Activated CD4-positive, alpha-beta T cell treated with anti-CD3 and anti-CD28 coated beads, Interleukin-2, amount 10 ng/mL, durations not matched to agents 24 days and 14 days (primary cell): ENCODE measurements at regions of chr13 and their contacts with region 1.

Region 1: GRCh38 chr13:75319254-75319653 is 162.7 kb downstream of the TBC1D4 start:
- DNase-seq: no peak
- H3K4me3 Mint-ChIP-seq: peak overlapping the region; percentile 4
- H3K27ac Mint-ChIP-seq: peak overlapping the region; percentile 93
- H3K4me1 Mint-ChIP-seq: peaks cover 51% of the 10 kb centered on the region
- H3K27me3 Mint-ChIP-seq: no peaks in the 10 kb centered on the region

Region 2: DNA sequence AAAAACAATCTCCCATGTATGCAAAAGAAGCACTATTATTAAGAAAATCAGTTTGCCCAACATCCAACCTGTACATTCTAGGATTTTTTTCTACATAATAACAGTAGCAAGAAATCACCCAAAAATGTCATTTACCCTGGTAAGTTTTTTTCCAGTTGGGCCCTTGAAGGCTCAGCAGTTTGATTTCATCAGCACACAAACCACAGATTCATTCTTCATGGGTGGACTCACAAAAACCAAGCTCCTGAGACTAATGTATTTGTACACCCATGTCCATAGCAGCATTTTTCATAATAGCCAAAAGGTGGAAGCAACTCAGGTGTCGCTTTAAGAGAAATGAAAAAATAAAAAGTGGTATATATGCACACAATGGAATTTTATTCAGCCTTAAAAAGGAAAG is 47.4 kb before region 1 on chr13:
- intact Hi-C with region 1: no loop called
- DNase-seq: no peak
- H3K4me3 Mint-ChIP-seq: no peak overlapping the region
- H3K27ac Mint-ChIP-seq: no peak overlapping the region
- H3K4me1 Mint-ChIP-seq: no peaks in the 10 kb centered on the region
- H3K27me3 Mint-ChIP-seq: no peaks in the 10 kb centered on the region

Region 3: GRCh38 chr13:75299913-75300862 is 19.1 kb before region 1 on chr13:
- intact Hi-C with region 1: loop called (anchors 1 kb)
- DNase-seq: no peak
- H3K4me3 Mint-ChIP-seq: peak overlapping the region; percentile 43
- H3K27ac Mint-ChIP-seq: peak overlapping the region; percentile 72
- H3K4me1 Mint-ChIP-seq: peaks cover 20% of the 10 kb centered on the region
- H3K27me3 Mint-ChIP-seq: no peaks in the 10 kb centered on the region

Region 4: DNA sequence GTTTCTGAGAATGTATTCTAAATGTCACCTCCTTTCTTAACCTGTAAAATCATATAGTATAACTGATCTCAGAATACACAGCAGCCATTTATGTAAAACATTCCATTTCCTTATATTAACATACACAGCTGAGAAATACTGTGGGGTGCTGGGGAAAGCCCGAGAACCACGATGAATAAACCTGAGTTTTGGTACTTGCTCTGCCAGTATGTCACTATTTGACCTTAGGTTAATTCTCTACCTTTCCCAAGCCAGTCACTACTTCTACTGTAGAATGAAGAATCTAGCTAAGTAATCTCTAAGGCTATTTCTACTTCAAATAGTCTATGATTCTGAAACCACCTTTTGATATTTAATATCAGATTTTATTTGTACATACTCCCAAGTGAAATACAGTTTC is 11.0 kb before region 1 on chr13:
- intact Hi-C with region 1: loop called (anchors 1 kb)
- DNase-seq: no peak
- H3K4me3 Mint-ChIP-seq: peak overlapping the region; percentile 4
- H3K27ac Mint-ChIP-seq: peak overlapping the region; percentile 46
- H3K4me1 Mint-ChIP-seq: peaks cover 47% of the 10 kb centered on the region
- H3K27me3 Mint-ChIP-seq: no peaks in the 10 kb centered on the region

Region 5: DNA sequence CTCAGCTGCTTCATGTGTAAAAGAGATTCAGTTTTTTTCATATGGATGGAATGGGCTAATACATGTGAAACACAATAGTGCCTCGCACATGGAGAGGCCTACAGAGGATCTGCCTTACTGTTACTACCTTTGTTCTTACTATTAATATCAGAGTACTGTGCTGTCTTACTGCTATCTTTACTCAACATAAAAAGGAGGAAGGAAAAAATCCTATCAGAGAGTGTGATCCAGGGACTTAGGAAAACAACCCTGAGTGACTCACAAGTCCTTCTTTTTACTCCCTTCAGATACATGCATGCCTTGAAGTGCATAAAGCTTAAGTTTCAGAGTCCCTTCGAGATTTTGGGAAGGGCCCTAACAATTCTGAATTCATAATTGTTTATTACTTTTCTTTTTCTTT is 25.9 kb after region 1 on chr13:
- intact Hi-C with region 1: no loop called
- DNase-seq: no peak
- H3K4me3 Mint-ChIP-seq: no peak overlapping the region
- H3K27ac Mint-ChIP-seq: no peak overlapping the region
- H3K4me1 Mint-ChIP-seq: peaks cover 10% of the 10 kb centered on the region
- H3K27me3 Mint-ChIP-seq: no peaks in the 10 kb centered on the region

Region 6: DNA sequence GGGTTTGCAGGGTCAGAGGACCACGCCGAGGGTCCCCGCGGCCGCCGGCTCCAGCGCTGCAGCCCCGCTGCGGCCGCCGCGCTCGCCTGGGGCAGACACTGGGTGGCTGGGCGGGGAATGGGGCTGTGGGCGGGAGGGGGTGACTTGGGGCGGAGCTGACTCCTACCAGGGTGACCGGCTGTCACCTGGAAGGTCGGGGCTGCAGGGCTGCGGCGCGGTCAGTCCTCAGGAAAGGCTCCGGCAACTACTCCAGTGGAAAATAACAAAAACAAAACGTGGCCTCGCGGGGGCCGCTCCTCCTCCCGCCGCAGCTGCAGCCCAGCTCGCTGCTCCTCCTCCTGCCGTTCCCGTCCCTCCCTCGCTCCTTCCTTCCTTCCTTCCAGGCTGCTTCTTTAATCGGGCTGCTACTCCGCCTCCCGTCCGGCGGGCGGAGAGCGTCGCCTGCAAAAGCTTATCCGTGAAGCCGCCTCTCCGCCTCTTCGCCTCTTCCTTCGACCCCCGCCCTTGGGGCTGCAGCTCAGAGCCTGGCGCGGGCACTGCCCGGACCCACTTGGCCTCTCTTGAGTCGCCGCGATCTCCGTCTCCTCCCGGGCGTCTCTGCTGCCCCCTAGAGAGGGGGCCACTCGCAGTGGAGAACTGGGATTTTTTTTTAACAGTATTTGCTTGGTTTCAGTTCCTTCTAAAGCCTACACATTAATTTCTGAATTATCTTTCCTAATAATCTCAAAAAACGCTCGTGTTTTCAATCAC is 163.0 kb after region 1 on chr13 and contains the start of gene TBC1D4:
- intact Hi-C with region 1: loop called (anchors 2 kb)
- DNase-seq: peak; percentile 87
- H3K4me3 Mint-ChIP-seq: peak within 1 kb of the TSS; percentile 99
- H3K27ac Mint-ChIP-seq: peak within 1 kb of the TSS; percentile 86
- H3K4me1 Mint-ChIP-seq: peaks cover 36% of the 10 kb centered on the region
- H3K27me3 Mint-ChIP-seq: peaks cover 47% of the 10 kb centered on the region
- total RNA-seq, gene TBC1D4: 72.3 and 77.0 TPM in 2 replicates